K562 (cell line): ENCODE measurements at regions of chr9 and their contacts with region 1.

Region 1: DNA sequence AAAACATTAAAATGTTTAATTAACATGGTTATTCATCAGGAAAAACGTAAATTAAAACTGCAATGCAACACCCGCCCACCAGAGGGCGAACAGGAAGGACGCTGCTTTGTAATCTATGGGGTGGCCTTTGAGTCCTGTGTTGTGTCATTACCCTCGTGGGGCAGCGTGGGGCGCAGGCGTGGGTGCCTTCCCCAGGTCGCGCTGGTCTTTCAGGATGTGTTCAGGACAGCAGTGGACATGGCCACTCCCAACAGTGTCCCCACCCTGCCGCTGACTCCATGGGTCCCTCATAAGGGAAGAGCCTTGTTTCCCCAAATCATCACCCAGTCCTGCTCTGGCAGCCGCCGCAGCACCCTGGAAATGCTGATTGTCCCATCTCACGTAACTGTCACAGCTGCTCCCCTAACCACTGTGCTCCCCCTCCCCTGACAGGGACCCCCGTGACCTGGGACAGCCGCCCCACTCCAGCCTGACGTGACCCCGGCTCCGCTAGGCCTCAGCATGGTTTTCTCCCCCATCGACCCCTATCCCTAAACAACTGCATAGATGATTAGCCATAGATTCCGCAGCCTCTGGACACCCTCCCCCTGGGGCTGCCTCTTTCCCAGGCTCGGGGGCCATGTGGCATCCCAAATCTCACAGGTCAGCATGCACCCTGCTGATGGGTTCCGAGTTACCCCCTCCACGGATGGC is 36.4 kb downstream of the GLT6D1 start:
- DNase-seq: peak; percentile 62 to 78 (median 70)
- ATAC-seq: peak; percentile 78
- H3K4me3 ChIP-seq: no peak overlapping the region
- H3K27ac ChIP-seq: no peak overlapping the region
- H3K4me1 ChIP-seq: peaks cover 0 to 12% of the 10 kb centered on the region in 2 experiments; a peak in 3 of 5 replicates
- H3K27me3 ChIP-seq: peaks cover 10 to 39% of the 10 kb centered on the region in 2 experiments; a peak in 3 of 5 replicates
- CTCF ChIP-seq: peak; percentile 76 to 81 (median 77)
- EP300 ChIP-seq: no peak
- POLR2A ChIP-seq: no peak
- RAD21 ChIP-seq: peak in 1 of 2 experiments; percentile 50; a peak in 2 of 4 replicates

Region 2: DNA sequence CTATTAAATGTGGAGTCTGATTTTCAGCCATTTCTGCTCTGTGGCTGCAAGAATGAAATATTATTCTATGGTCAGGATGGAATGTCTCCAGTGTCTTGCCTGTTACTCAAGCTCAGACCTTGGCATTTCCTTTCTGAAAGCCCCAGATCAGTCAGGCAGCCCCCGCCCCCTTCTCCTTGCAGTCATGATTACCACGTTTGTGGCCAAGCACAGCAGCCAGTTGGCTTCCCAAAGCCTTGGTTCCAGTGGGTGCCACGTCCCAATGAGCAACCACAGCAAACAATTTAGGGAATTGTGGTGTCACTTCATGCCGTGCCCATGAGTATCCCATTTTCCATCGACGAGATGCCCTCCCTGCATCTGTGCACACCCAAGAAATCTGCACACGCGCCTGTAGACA is 66.7 kb before region 1 on chr9:
- CTCF ChIA-PET with region 1: no interaction called
- POLR2A ChIA-PET with region 1: no interaction called
- in situ Hi-C with region 1: no loop called
- intact Hi-C with region 1: no loop called
- DNase-seq: no peak
- ATAC-seq: no peak
- H3K4me3 ChIP-seq: no peak overlapping the region
- H3K27ac ChIP-seq: no peak overlapping the region
- H3K4me1 ChIP-seq: no peaks in the 10 kb centered on the region
- H3K27me3 ChIP-seq: peaks cover 13 to 38% of the 10 kb centered on the region in 2 experiments; a peak in 3 of 5 replicates
- CTCF ChIP-seq: no peak
- EP300 ChIP-seq: no peak
- POLR2A ChIP-seq: no peak
- RAD21 ChIP-seq: no peak

Region 3: GRCh38 chr9:135689011-135689410 is 86.1 kb after region 1 on chr9:
- CTCF ChIA-PET with region 1: no interaction called
- POLR2A ChIA-PET with region 1: no interaction called
- in situ Hi-C with region 1: no loop called
- intact Hi-C with region 1: loop called (anchors 10 kb)
- DNase-seq: no peak
- ATAC-seq: no peak
- H3K4me3 ChIP-seq: no peak overlapping the region
- H3K27ac ChIP-seq: no peak overlapping the region
- H3K4me1 ChIP-seq: peaks cover 0 to 23% of the 10 kb centered on the region in 2 experiments; a peak in 1 of 5 replicates
- H3K27me3 ChIP-seq: peaks cover 25 to 84% of the 10 kb centered on the region in 2 experiments; a peak in 4 of 5 replicates
- CTCF ChIP-seq: no peak
- EP300 ChIP-seq: no peak
- POLR2A ChIP-seq: no peak
- RAD21 ChIP-seq: no peak

Region 4: GRCh38 chr9:135726138-135726853 is 123.4 kb after region 1 on chr9:
- CTCF ChIA-PET with region 1: no interaction called
- POLR2A ChIA-PET with region 1: no interaction called
- in situ Hi-C with region 1: no loop called
- intact Hi-C with region 1: loop called (anchors 5 kb)
- DNase-seq: no peak
- ATAC-seq: peak; percentile 81
- H3K4me3 ChIP-seq: no peak overlapping the region
- H3K27ac ChIP-seq: no peak overlapping the region
- H3K4me1 ChIP-seq: peaks cover 0 to 19% of the 10 kb centered on the region in 2 experiments; a peak in 2 of 5 replicates
- H3K27me3 ChIP-seq: peaks cover 17 to 69% of the 10 kb centered on the region in 2 experiments; a peak in 4 of 5 replicates
- CTCF ChIP-seq: peak; percentile 42 to 54 (median 48); a peak in 5 of 6 replicates
- EP300 ChIP-seq: no peak
- POLR2A ChIP-seq: no peak
- RAD21 ChIP-seq: peak in 1 of 2 experiments; percentile 61; a peak in 2 of 4 replicates

Region 5: DNA sequence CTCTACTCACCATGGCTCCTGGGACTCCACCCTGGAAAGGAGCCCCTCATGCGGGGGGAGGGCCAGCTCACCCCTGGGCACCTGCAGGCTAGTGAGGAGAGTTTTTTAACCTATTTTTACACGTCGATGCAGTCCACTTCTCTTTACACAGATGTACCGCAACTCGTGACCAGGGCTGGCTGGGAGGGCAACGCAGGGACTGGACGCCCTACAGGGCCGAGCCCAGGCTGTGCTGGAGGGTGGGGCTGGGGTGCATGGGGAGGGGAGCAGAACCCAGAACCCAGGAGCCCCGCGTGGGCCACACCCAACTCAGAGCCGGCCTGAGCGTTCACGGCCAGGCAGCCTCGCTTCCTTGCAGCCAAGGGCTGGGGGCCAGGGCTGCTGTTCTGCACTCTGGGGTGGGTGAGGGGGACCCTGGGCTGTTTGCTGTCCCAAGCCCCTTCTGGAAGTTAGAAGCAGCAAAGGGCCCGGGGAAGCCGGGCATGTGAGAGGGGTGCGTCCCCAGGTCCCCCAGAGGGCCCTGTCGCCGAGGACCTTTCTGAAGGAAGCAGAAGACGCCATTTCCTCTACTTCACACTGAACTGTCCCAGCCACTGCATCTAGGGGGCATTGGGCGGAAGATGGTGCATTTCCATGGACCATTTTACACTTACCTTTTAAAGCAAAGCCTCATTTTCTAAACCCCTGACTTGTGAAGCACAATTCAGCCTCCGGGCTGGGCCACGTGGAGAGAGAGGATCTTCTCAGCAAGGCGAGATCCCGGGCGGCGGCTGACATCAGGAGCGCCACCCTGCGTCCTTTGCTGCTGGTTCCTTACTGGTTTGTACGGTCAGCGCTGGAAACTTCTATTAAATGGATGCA is 189.6 kb after region 1 on chr9:
- CTCF ChIA-PET with region 1: interaction called, 3 read pairs
- POLR2A ChIA-PET with region 1: no interaction called
- in situ Hi-C with region 1: no loop called
- intact Hi-C with region 1: loop called (anchors 5 kb)
- DNase-seq: peak; percentile 65 to 71 (median 67)
- ATAC-seq: peak; percentile 73
- H3K4me3 ChIP-seq: no peak overlapping the region
- H3K27ac ChIP-seq: no peak overlapping the region
- H3K4me1 ChIP-seq: peaks cover 3 to 63% of the 10 kb centered on the region in 2 experiments; a peak in 3 of 5 replicates
- H3K27me3 ChIP-seq: peaks cover 31 to 73% of the 10 kb centered on the region in 2 experiments
- CTCF ChIP-seq: peak; percentile 58 to 74 (median 61)
- EP300 ChIP-seq: no peak
- POLR2A ChIP-seq: no peak
- RAD21 ChIP-seq: peak in 1 of 2 experiments; percentile 63; a peak in 2 of 4 replicates

Region 6: GRCh38 chr9:135961277-135961705 is 358.4 kb after region 1 on chr9 and contains the start of gene UBAC1:
- CTCF ChIA-PET with region 1: no interaction called
- POLR2A ChIA-PET with region 1: no interaction called
- in situ Hi-C with region 1: no loop called
- intact Hi-C with region 1: loop called (anchors 5 kb)
- DNase-seq: peak; percentile 92 to 98 (median 95)
- ATAC-seq: peak; percentile 76
- H3K4me3 ChIP-seq: peak within 1 kb of the TSS; percentile 76
- H3K27ac ChIP-seq: peak within 1 kb of the TSS; percentile 89
- H3K4me1 ChIP-seq: peaks cover 16 to 41% of the 10 kb centered on the region in 2 experiments
- H3K27me3 ChIP-seq: no peaks in the 10 kb centered on the region
- CTCF ChIP-seq: peak; percentile 32 to 53 (median 37); a peak in 3 of 6 replicates
- EP300 ChIP-seq: 0 out of 2 replicates have a peak, but pooled peaks have one; percentile 20
- POLR2A ChIP-seq: no peak
- RAD21 ChIP-seq: no peak
- polyA plus RNA-seq, gene UBAC1: 94.0 to 117 TPM

Region 7: GRCh38 chr9:136129176-136129575 is 526.2 kb after region 1 on chr9:
- CTCF ChIA-PET with region 1: no interaction called
- POLR2A ChIA-PET with region 1: no interaction called
- in situ Hi-C with region 1: no loop called
- intact Hi-C with region 1: loop called (anchors 5 kb)
- DNase-seq: no peak
- ATAC-seq: no peak
- H3K4me3 ChIP-seq: no peak overlapping the region
- H3K27ac ChIP-seq: no peak overlapping the region
- H3K4me1 ChIP-seq: peaks cover 8 to 44% of the 10 kb centered on the region in 2 experiments
- H3K27me3 ChIP-seq: peaks cover 49 to 83% of the 10 kb centered on the region in 2 experiments
- CTCF ChIP-seq: no peak
- EP300 ChIP-seq: no peak
- POLR2A ChIP-seq: no peak
- RAD21 ChIP-seq: no peak